ENCODE measurements at regions of chr11 and their contacts with region 1.

Region 1: DNA sequence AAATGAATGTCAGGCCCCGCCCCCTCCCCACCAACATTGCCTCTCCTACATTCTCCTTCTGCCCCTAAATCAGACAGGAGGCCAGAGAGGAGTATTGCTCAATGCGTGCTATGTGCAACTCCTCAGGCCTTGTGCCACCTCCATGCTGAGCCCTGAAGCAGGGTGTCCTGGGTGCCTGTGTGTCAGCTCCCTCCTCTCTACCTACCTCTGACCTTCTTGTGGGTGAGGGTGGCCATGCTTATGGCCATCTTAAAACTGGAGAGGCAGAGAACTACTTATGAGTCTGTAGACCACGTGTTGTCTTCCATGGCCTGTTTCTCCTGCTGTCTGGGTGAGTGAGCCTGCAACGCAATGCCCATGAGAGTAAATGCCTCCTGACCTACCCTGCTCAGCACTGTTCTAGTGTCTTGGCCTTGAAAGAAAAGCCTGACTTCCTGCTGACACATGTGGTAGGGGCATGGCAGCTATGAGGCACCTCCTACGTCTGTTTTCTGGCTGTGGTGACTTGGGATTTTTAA is 10.5 kb downstream of the MCAM start:
- DNase-seq: no peak

Region 2: DNA sequence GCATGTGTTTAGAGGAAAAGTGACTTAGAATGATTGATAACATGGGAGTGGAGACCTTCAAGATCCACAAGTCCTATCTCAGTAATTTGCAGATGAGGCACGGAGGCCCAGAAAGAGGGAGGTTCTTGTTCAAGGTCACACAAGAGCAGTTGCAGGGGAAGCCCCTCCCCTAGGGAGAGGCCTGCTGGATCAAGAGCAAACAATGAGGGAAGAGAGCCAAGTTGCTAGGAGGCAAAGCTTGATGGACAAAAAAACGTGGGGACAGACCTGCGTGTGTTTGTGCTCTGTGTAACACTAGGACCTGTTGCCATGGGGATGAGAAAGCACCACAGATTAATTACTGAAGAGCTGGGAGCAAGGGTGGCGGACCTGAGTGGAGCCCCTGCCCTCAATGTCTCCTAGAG is 46.4 kb after region 1 on chr11:
- in situ Hi-C with region 1: loop called (anchors 5 kb)
- DNase-seq: no peak